ENCODE measurements at regions of chr1 and their contacts with region 1.

Region 1: GRCh38 chr1:19918057-19918456 is 5.4 kb downstream of the PLA2G2E start:
- DNase-seq: peak; percentile 91
- CTCF ChIP-seq: peak; percentile 77

Region 2: GRCh38 chr1:20151906-20152598 is 234.0 kb after region 1 on chr1:
- in situ Hi-C with region 1: loop called (anchors 25 kb)
- DNase-seq: peak; percentile 93
- CTCF ChIP-seq: peak; percentile 88